ENCODE measurements at regions of chr1 and their contacts with region 1.

Region 1: DNA sequence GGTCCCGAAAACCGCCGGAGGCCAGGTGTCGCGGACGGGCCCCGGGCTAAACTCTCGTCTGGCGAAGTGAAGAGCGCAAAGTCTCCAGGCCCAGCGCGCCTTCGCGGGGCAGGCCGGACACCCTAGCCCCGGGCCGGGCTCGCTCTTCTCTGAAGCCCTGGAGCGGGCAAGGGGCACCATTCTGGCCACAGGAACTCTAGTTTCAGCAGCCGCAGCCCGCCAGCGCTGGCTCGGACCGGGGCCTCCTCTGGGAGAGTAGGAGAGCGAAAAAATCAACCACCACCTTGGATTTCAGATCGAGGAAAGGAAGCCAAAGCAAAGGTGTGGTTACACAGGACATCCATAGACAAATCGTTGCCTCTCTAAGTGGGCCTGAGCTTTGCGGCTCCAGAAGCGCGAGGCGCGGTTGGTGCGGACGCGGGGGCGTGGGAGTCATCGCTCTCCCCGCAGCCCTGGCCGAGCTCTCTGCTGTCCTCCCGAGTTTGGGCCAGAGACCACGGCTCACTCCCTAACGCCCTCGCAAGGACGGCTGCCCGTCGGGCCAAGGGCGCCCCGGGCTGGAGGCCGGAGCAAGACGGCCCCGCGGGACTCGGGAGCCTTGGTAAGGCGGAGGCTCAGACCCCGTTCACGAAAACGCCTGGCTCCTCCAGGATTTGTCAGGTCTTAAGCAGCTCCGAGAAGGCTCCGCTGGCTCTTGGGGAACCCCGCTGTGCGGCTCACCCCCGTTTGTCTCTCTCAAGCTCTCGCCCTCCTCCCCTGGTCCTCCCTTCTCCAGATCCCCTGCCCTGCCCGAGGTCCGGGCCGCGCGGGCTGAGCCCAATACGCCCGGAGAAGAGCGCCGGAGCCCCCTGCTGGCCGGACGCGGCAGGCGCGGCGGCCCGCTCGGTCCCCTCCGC is 132.9 kb upstream of the DPYD start:
- DNase-seq: peak; percentile 85
- H3K4me3 ChIP-seq: peak overlapping the region in 2 of 3 experiments; percentile 34 to 35
- H3K27ac ChIP-seq: peak overlapping the region; percentile 89
- H3K4me1 ChIP-seq: peaks cover 35% of the 10 kb centered on the region
- H3K27me3 ChIP-seq: no peaks in the 10 kb centered on the region
- CTCF ChIP-seq: peak; percentile 68 to 97
- POLR2A ChIP-seq: no peak

Region 2: DNA sequence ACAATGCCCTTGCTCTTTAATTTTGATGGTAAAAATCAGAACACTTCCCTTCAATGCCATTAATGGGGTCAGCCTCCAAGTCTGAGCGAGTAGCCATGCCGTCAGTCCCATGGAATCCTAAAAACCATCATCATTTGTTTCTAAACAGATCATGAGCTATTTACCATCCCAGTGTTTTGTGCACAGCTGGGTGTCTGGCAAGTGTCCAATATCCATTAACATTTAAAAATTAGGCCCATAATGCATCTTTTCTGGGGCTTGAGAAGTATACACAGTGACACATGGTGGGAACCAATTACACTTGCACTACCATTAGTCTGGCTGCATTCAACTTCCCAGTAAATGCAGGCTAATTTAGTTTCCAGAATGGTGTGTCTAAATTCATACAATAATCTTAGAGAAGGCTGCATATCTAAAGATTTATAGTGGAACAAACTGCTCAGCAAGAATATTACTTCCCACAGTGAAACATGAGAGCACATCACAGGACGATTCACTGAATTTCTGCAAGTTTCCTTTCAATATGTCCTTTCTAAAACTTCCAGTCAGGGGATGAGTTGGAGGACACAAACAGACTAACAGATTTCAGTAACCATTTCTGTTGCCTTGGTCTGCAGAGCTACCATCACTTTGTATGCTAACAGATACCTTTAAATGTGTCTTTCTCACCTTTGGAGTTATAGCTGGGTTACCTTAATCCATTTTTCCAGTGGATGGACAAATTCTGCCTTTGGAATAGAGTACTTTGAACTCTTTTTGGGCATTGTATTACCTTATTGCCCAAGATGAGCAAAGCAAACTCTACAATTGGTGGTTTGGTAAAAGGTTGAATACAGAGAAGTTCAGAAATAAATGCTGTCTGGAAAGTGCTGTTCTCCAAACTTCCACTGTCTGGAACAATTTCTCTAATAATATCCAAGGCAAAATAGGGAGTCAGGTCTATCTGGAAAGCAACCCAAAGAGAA is 1074.1 kb before region 1 on chr1:
- CTCF ChIA-PET with region 1: no interaction called
- POLR2A ChIA-PET with region 1: no interaction called
- dilution Hi-C with region 1: no loop called
- intact Hi-C with region 1: loop called (anchors 5 kb)
- DNase-seq: no peak
- H3K4me3 ChIP-seq: no peak overlapping the region
- H3K27ac ChIP-seq: no peak overlapping the region
- H3K4me1 ChIP-seq: peaks cover 16% of the 10 kb centered on the region
- H3K27me3 ChIP-seq: peaks cover 0 to 4% of the 10 kb centered on the region in 2 experiments
- CTCF ChIP-seq: no peak
- POLR2A ChIP-seq: no peak

Region 3: DNA sequence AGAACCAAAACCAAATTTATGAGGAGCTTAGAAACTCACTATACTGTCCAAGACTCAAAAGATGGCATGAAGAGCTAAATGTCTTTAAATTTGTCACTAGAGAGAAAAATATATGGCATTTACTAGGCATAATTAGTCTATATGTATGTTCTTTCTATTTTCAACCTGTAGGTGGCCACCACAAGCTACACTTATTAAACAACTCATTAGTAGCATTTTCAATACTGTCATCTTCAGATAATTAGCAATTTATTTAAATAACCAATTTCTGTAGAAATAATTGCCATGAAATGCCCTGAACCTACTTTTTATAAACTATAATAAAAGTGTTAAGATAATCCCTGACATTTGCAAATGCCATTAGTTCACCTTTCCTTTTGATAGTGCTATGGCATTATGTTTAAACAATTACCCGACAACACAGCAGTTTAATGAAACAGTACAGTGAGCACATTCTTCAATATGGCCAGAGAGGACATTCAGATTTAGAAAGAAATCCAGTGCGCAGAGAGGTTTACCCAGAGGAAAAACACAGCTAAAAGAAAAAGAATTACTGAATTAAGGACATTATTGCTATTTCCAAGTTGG is 809.7 kb before region 1 on chr1:
- CTCF ChIA-PET with region 1: interaction called, 18 read pairs
- POLR2A ChIA-PET with region 1: no interaction called
- dilution Hi-C with region 1: no loop called
- intact Hi-C with region 1: loop called (anchors 1 kb)
- DNase-seq: peak; percentile 48
- H3K4me3 ChIP-seq: no peak overlapping the region
- H3K27ac ChIP-seq: no peak overlapping the region
- H3K4me1 ChIP-seq: no peaks in the 10 kb centered on the region
- H3K27me3 ChIP-seq: no peaks in the 10 kb centered on the region
- CTCF ChIP-seq: peak in 1 of 2 donors; percentile 35
- POLR2A ChIP-seq: no peak

Region 4: GRCh38 chr1:97820470-97821188 is 233.1 kb before region 1 on chr1:
- CTCF ChIA-PET with region 1: interaction called, 3 read pairs
- POLR2A ChIA-PET with region 1: no interaction called
- dilution Hi-C with region 1: no loop called
- intact Hi-C with region 1: loop called (anchors 1 kb)
- DNase-seq: peak; percentile 62
- H3K4me3 ChIP-seq: no peak overlapping the region
- H3K27ac ChIP-seq: no peak overlapping the region
- H3K4me1 ChIP-seq: no peaks in the 10 kb centered on the region
- H3K27me3 ChIP-seq: no peaks in the 10 kb centered on the region
- CTCF ChIP-seq: peak; percentile 21 to 29
- POLR2A ChIP-seq: no peak

Region 5: DNA sequence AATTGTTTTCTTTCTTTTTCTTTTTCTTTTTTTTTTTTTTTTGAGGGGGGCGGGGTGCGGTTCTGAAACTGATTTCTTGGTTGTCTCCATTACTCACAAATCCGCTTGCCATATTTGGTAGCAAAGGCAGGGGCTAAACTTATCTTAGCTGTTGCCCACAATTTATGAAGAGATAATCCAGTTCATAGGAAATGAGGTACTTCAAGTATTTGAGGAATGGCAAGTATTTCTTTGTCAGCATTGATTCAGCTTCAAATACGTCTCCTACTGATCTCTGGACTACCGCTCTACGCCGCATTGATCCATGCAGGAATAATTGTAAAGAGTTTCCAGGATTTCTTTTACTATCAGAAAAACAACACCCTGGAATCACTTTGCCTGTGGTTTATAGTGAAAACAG is 156.3 kb after region 1 on chr1:
- CTCF ChIA-PET with region 1: interaction called, 5 read pairs
- POLR2A ChIA-PET with region 1: no interaction called
- dilution Hi-C with region 1: no loop called
- intact Hi-C with region 1: loop called (anchors 1 kb)
- DNase-seq: peak; percentile 89
- H3K4me3 ChIP-seq: peak overlapping the region; percentile 31 to 94 (median 89)
- H3K27ac ChIP-seq: peak overlapping the region; percentile 91
- H3K4me1 ChIP-seq: peaks cover 23% of the 10 kb centered on the region
- H3K27me3 ChIP-seq: no peaks in the 10 kb centered on the region
- CTCF ChIP-seq: no peak
- POLR2A ChIP-seq: peak; percentile 69

Region 6: GRCh38 chr1:98388441-98388840 is 334.7 kb after region 1 on chr1:
- CTCF ChIA-PET with region 1: interaction called, 3 read pairs
- POLR2A ChIA-PET with region 1: no interaction called
- dilution Hi-C with region 1: no loop called
- intact Hi-C with region 1: loop called (anchors 1 kb)
- DNase-seq: peak; percentile 91
- H3K4me3 ChIP-seq: peak overlapping the region in 1 of 3 experiments; percentile 27
- H3K27ac ChIP-seq: peak overlapping the region; percentile 80
- H3K4me1 ChIP-seq: peaks cover 57% of the 10 kb centered on the region
- H3K27me3 ChIP-seq: no peaks in the 10 kb centered on the region
- CTCF ChIP-seq: no peak
- POLR2A ChIP-seq: peak; percentile 18

Measured in endothelial cell of umbilical vein (primary cell).